CD4-positive, alpha-beta T cell (primary cell): ENCODE measurements at regions of chr13 and their contacts with region 1.

Region 1: GRCh38 chr13:99033814-99034213 is 56.0 kb upstream of the DOCK9 start:
- DNase-seq: peak in 3 of 14 experiments; percentile 39 to 53 (median 42)
- ATAC-seq: peak; percentile 70
- H3K4me3 ChIP-seq: no peak overlapping the region
- H3K4me3 Mint-ChIP-seq: no peak overlapping the region
- H3K27ac ChIP-seq: no peak overlapping the region
- H3K27ac Mint-ChIP-seq: peak overlapping the region; percentile 6
- H3K4me1 ChIP-seq: peaks cover 4% of the 10 kb centered on the region
- H3K4me1 Mint-ChIP-seq: peaks cover 51% of the 10 kb centered on the region
- H3K27me3 ChIP-seq: no peaks in the 10 kb centered on the region
- H3K27me3 Mint-ChIP-seq: no peaks in the 10 kb centered on the region
- CTCF ChIP-seq: peak; percentile 58

Region 2: DNA sequence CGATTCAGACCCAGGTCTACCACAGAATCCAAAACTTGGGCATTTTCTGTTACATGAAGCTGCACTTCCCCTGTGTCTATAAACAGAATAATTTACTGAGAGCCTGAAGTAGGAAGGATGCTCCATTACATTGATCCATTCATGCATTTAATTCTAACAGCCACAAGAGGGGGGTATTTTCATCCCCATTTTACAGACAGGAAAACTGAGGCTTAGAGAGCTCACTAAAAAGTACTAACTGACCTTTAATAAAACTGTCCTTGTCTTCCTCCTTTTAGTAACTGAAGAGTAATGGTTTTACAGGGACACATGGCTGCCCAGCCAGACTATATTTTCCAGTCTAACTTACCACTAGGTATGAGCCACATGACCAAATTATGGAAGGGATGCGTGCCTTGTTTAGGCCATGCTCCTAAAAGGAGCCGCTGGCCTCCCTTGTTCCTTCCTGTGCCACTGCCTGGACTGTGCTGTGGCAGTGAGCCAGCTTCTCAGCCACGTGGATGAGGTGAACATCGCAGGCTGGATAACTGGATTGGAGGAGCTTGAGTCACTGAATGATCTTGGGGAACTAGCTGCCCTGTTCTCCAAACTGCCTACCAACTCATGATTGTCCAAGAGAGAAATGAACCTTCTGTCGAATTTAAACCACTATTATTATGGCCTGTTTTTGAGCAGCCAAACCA is 164.3 kb before region 1 on chr13:
- CTCF ChIA-PET with region 1: no interaction called
- POLR2A ChIA-PET with region 1: no interaction called
- intact Hi-C with region 1: loop called (anchors 1 to 10 kb)
- DNase-seq: peak in 2 of 14 experiments; percentile 25 to 35
- ATAC-seq: no peak
- H3K4me3 ChIP-seq: no peak overlapping the region
- H3K4me3 Mint-ChIP-seq: no peak overlapping the region
- H3K27ac ChIP-seq: no peak overlapping the region
- H3K27ac Mint-ChIP-seq: peak overlapping the region; percentile 11
- H3K4me1 ChIP-seq: no peaks in the 10 kb centered on the region
- H3K4me1 Mint-ChIP-seq: peaks cover 19% of the 10 kb centered on the region
- H3K27me3 ChIP-seq: no peaks in the 10 kb centered on the region
- H3K27me3 Mint-ChIP-seq: no peaks in the 10 kb centered on the region
- CTCF ChIP-seq: no peak

Region 3: GRCh38 chr13:98910501-98910951 is 123.3 kb before region 1 on chr13:
- CTCF ChIA-PET with region 1: interaction called, 4 read pairs
- POLR2A ChIA-PET with region 1: no interaction called
- intact Hi-C with region 1: loop called in 1 of 2 experiments (anchors 10 kb)
- DNase-seq: peak in 10 of 14 experiments; percentile 5 to 77 (median 24)
- ATAC-seq: peak; percentile 87
- H3K4me3 ChIP-seq: no peak overlapping the region
- H3K4me3 Mint-ChIP-seq: peak overlapping the region; percentile 70
- H3K27ac ChIP-seq: peak overlapping the region in 1 of 2 donors; percentile 4
- H3K27ac Mint-ChIP-seq: peak overlapping the region; percentile 91
- H3K4me1 ChIP-seq: peaks cover 8% of the 10 kb centered on the region
- H3K4me1 Mint-ChIP-seq: peaks cover 39% of the 10 kb centered on the region
- H3K27me3 ChIP-seq: no peaks in the 10 kb centered on the region
- H3K27me3 Mint-ChIP-seq: no peaks in the 10 kb centered on the region
- CTCF ChIP-seq: no peak

Region 4: GRCh38 chr13:99051768-99052455 is 18.1 kb after region 1 on chr13:
- CTCF ChIA-PET with region 1: interaction called, 13 read pairs
- POLR2A ChIA-PET with region 1: interaction called, 9 read pairs
- intact Hi-C with region 1: no loop called
- DNase-seq: peak in 3 of 14 experiments; percentile 60 to 76 (median 68)
- ATAC-seq: peak; percentile 48
- H3K4me3 ChIP-seq: peak overlapping the region; percentile 21
- H3K4me3 Mint-ChIP-seq: peak overlapping the region; percentile 79
- H3K27ac ChIP-seq: peak overlapping the region; percentile 49 to 50
- H3K27ac Mint-ChIP-seq: peak overlapping the region; percentile 95
- H3K4me1 ChIP-seq: peaks cover 86% of the 10 kb centered on the region
- H3K4me1 Mint-ChIP-seq: peaks cover 91% of the 10 kb centered on the region
- H3K27me3 ChIP-seq: no peaks in the 10 kb centered on the region
- H3K27me3 Mint-ChIP-seq: no peaks in the 10 kb centered on the region
- CTCF ChIP-seq: no peak

Region 5: DNA sequence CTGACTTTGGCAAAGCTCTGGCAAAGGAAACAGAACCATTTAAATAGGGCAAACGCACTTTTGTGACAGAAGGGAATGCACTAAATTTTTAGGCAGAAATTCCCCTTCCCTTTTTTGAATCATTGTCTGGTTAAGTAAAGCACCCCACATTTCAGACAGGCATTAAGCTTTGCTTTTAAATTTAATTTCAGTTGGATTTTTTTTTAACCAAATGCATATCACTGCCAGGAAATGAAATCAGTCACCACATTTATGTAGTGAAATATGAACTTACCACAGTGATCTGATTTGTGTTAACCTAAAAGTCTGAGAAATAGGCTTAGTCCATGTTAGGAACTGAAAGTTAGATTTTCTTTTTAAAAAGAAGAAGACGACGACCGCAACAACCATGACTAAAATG is 262.6 kb after region 1 on chr13:
- CTCF ChIA-PET with region 1: no interaction called
- POLR2A ChIA-PET with region 1: no interaction called
- intact Hi-C with region 1: no loop called
- DNase-seq: peak in 3 of 14 experiments; percentile 63 to 74 (median 68)
- ATAC-seq: peak; percentile 60
- H3K4me3 ChIP-seq: peak overlapping the region; percentile 28
- H3K4me3 Mint-ChIP-seq: peak overlapping the region; percentile 86
- H3K27ac ChIP-seq: peak overlapping the region; percentile 39 to 78
- H3K27ac Mint-ChIP-seq: peak overlapping the region; percentile 100
- H3K4me1 ChIP-seq: peaks cover 43% of the 10 kb centered on the region
- H3K4me1 Mint-ChIP-seq: peaks cover 93% of the 10 kb centered on the region
- H3K27me3 ChIP-seq: no peaks in the 10 kb centered on the region
- H3K27me3 Mint-ChIP-seq: no peaks in the 10 kb centered on the region
- CTCF ChIP-seq: no peak